ENCODE measurements at regions of chr1 and their contacts with region 1.

Region 1: GRCh38 chr1:169485544-169486278 is at the start of gene SLC19A2:
- DNase-seq: peak; percentile 100
- H3K4me3 ChIP-seq: peak within 1 kb of the TSS; percentile 70 to 93
- H3K27ac ChIP-seq: peak within 1 kb of the TSS; percentile 97 to 99
- H3K4me1 ChIP-seq: peaks cover 0 to 36% (median 19%) of the 10 kb centered on the region in 4 donors
- H3K27me3 ChIP-seq: no peaks in the 10 kb centered on the region
- CTCF ChIP-seq: peak; percentile 20 to 37

Region 2: GRCh38 chr1:169466259-169467230 is 19.2 kb before region 1 on chr1:
- intact Hi-C with region 1: no loop called
- DNase-seq: no peak
- H3K4me3 ChIP-seq: no peak overlapping the region
- H3K27ac ChIP-seq: no peak overlapping the region
- H3K4me1 ChIP-seq: no peaks in the 10 kb centered on the region
- H3K27me3 ChIP-seq: no peaks in the 10 kb centered on the region
- CTCF ChIP-seq: peak; percentile 42 to 43

Region 3: GRCh38 chr1:169893494-169894362 is 408.0 kb after region 1 on chr1 and contains the start of gene SCYL3:
- intact Hi-C with region 1: loop called (anchors 5 kb)
- DNase-seq: peak; percentile 96 to 97
- H3K4me3 ChIP-seq: peak within 1 kb of the TSS; percentile 86 to 91
- H3K27ac ChIP-seq: peak within 1 kb of the TSS; percentile 91 to 97
- H3K4me1 ChIP-seq: peaks cover 0 to 27% (median 17%) of the 10 kb centered on the region in 4 donors
- H3K27me3 ChIP-seq: no peaks in the 10 kb centered on the region
- CTCF ChIP-seq: no peak

Measured in tibial artery (tissue), 4 donors.